PC-3 (cell line): ENCODE measurements at regions of chr21 and their contacts with region 1.

Region 1: GRCh38 chr21:21163904-21164303 is 165.7 kb downstream of the NCAM2 start:
- DNase-seq: peak; percentile 72
- ATAC-seq: peak; percentile 66
- H3K4me3 ChIP-seq: no peak overlapping the region
- H3K27ac ChIP-seq: no peak overlapping the region
- H3K4me1 ChIP-seq: no peaks in the 10 kb centered on the region
- H3K27me3 ChIP-seq: no peaks in the 10 kb centered on the region
- CTCF ChIP-seq: peak; percentile 76

Region 2: GRCh38 chr21:21210552-21210951 is 46.6 kb after region 1 on chr21:
- CTCF ChIA-PET with region 1: no interaction called
- POLR2A ChIA-PET with region 1: no interaction called
- intact Hi-C with region 1: loop called (anchors 5 kb)
- DNase-seq: no peak
- ATAC-seq: no peak
- H3K4me3 ChIP-seq: no peak overlapping the region
- H3K27ac ChIP-seq: no peak overlapping the region
- H3K4me1 ChIP-seq: no peaks in the 10 kb centered on the region
- H3K27me3 ChIP-seq: no peaks in the 10 kb centered on the region
- CTCF ChIP-seq: no peak

Region 3: GRCh38 chr21:21921421-21922232 is 757.7 kb after region 1 on chr21:
- CTCF ChIA-PET with region 1: no interaction called
- POLR2A ChIA-PET with region 1: no interaction called
- intact Hi-C with region 1: loop called (anchors 5 kb)
- DNase-seq: peak; percentile 65
- ATAC-seq: peak; percentile 64
- H3K4me3 ChIP-seq: peak overlapping the region; percentile 33
- H3K27ac ChIP-seq: no peak overlapping the region
- H3K4me1 ChIP-seq: no peaks in the 10 kb centered on the region
- H3K27me3 ChIP-seq: no peaks in the 10 kb centered on the region
- CTCF ChIP-seq: peak; percentile 88